PC-3 (cell line): ENCODE measurements at regions of chr17 and their contacts with region 1.

Region 1: DNA sequence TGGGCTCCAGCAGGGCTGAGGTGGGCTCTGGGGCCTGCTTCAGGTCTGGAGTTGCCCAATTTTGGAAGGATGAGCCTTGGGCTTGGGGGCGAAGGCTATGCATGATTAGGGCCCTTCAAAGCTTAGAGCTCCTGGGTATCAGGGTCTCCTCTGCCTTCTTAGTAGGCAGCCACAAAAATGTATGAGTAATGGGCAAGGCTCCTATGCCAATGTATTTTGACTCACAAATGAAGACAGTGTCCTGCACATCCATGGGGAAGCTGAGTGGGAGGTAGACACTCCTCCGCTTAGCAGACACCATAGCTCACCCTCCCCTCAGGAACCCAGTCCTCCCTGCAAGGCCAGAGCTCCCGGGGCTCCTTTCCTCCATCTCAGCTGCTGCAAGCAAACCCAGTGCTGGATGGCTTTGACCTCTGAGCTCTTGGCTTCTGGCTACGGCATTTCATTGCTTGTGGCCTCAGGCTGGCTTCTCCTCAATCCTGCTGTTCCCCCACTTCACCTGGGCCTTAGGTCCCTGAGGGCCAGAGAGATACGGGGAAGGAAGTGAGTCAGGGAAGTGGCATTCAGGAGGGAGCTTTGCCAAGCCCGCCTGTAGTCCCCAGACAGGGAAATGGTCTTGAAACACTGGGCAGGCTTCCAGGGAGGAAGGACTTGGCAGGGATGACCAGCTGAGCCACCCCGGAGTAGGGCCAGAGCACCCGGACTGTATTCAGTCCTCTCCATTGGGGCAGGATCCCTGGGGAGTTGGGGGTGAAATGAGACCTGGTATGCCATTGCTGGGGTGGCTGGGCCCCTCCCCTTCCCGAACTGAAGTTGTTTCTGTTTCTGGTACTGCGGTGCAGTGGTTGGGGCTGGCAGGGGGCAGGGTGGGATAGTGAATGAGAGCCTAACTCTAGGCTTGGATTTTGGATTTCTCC is 4.4 kb downstream of the ABCC3 start:
- DNase-seq: peak; percentile 100
- ATAC-seq: peak; percentile 62
- H3K4me3 ChIP-seq: peak overlapping the region; percentile 72; the same call in 1 of the 2 replicates
- H3K27ac ChIP-seq: peak overlapping the region; percentile 90
- H3K4me1 ChIP-seq: peaks cover 78% of the 10 kb centered on the region
- H3K27me3 ChIP-seq: no peaks in the 10 kb centered on the region
- CTCF ChIP-seq: no peak

Region 2: DNA sequence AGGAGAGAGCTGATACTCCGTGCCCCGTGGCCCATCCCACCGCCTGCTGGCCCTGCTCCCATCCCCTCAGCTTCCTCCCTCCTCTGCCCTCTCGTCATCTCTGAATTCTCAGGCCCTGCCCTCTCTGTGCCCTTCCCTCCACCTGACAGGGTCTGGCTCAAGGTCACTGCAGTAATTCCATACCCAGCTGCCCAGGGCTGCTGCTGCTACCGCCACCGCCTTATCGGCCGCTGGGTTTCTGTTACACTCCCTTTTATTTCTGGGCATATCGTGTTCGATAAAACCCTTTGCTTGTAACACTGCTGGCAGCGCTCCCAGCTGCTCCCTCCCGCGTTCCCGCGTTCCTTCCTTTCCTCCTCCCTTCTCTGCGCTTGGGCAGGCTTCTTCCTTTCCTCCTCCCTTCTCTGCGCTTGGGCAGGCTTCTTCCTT is 105.4 kb before region 1 on chr17:
- CTCF ChIA-PET with region 1: no interaction called
- POLR2A ChIA-PET with region 1: interaction called, 11 read pairs
- intact Hi-C with region 1: no loop called
- DNase-seq: peak; percentile 63
- ATAC-seq: peak; percentile 64
- H3K4me3 ChIP-seq: peak overlapping the region; percentile 78
- H3K27ac ChIP-seq: peak overlapping the region; percentile 76
- H3K4me1 ChIP-seq: peaks cover 33% of the 10 kb centered on the region
- H3K27me3 ChIP-seq: no peaks in the 10 kb centered on the region
- CTCF ChIP-seq: no peak

Region 3: GRCh38 chr17:50661795-50662391 is 22.8 kb after region 1 on chr17:
- CTCF ChIA-PET with region 1: interaction called, 18 read pairs
- POLR2A ChIA-PET with region 1: interaction called, 6 read pairs
- intact Hi-C with region 1: loop called (anchors 1 kb)
- DNase-seq: peak; percentile 100
- ATAC-seq: peak; percentile 76
- H3K4me3 ChIP-seq: peak overlapping the region; percentile 26; the same call in 1 of the 2 replicates
- H3K27ac ChIP-seq: peak overlapping the region; percentile 89
- H3K4me1 ChIP-seq: peaks cover 37% of the 10 kb centered on the region
- H3K27me3 ChIP-seq: no peaks in the 10 kb centered on the region
- CTCF ChIP-seq: no peak

Region 4: GRCh38 chr17:50681263-50682210 is 42.4 kb after region 1 on chr17:
- CTCF ChIA-PET with region 1: no interaction called
- POLR2A ChIA-PET with region 1: interaction called, 6 read pairs
- intact Hi-C with region 1: loop called (anchors 1 kb)
- DNase-seq: peak; percentile 84
- ATAC-seq: peak; percentile 52
- H3K4me3 ChIP-seq: no peak overlapping the region
- H3K27ac ChIP-seq: no peak overlapping the region
- H3K4me1 ChIP-seq: peaks cover 33% of the 10 kb centered on the region
- H3K27me3 ChIP-seq: no peaks in the 10 kb centered on the region
- CTCF ChIP-seq: peak; percentile 86